ENCODE measurements at regions of chr17 and their contacts with region 1.

Region 1: DNA sequence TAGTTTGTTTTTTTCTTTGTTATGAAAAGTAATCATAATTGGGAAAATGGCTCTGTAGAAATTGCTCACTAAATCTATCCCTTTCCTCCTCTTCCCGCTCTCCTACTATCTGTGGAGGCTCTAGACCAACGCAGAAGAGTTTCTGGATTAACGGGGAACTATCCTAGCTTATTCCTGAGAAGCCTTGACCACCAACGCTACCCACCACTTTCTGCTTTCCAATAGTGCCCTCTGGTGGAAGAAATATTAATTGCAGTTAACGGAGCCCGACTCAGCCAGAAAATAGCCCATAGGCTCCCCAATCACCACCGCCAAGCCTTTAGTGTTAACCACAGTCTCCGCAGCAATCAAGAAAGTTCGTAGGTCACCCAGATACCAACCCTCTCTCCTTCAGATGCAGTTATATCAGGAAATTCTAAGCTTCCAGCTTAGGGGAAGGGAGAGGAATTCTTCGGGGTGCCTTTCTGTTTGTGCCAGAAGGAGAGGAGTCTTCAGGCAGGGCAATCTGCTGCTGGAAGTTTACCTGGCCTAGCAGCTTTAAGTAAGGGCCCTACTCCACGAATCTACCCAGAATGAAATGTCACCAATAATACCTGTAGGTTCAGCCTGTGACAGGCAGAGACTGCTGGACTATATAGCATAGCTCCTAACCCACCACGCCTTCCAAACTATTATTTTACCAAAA is 23.0 kb upstream of the NSRP1 start:
- DNase-seq: peak; percentile 54
- ATAC-seq: peak; percentile 86
- H3K4me3 ChIP-seq: no peak overlapping the region
- H3K27ac ChIP-seq: no peak overlapping the region
- H3K4me1 ChIP-seq: peaks cover 0 to 32% of the 10 kb centered on the region in 2 experiments; a peak in 2 of 4 replicates
- H3K27me3 ChIP-seq: no peaks in the 10 kb centered on the region
- CTCF ChIP-seq: peak; percentile 62 to 91 (median 85)
- POLR2A ChIP-seq: no peak
- RAD21 ChIP-seq: peak; percentile 93

Region 2: GRCh38 chr17:29589524-29590410 is 503.8 kb before region 1 on chr17 and contains the start of gene GIT1:
- CTCF ChIA-PET with region 1: interaction called, 16 read pairs
- POLR2A ChIA-PET with region 1: no interaction called
- RAD21 ChIA-PET with region 1: interaction called in 1 of 2 experiments, 3 read pairs
- intact Hi-C with region 1: no loop called
- DNase-seq: peak; percentile 59
- ATAC-seq: peak; percentile 55
- H3K4me3 ChIP-seq: peak within 1 kb of the TSS; percentile 86 to 96
- H3K27ac ChIP-seq: peak within 1 kb of the TSS; percentile 94
- H3K4me1 ChIP-seq: peaks cover 32 to 73% of the 10 kb centered on the region in 2 experiments
- H3K27me3 ChIP-seq: no peaks in the 10 kb centered on the region
- CTCF ChIP-seq: no peak
- POLR2A ChIP-seq: peak; percentile 23
- RAD21 ChIP-seq: no peak
- total RNA-seq, gene GIT1: 76.5 TPM

Region 3: GRCh38 chr17:29777663-29778062 is 315.9 kb before region 1 on chr17:
- CTCF ChIA-PET with region 1: interaction called, 14 read pairs
- POLR2A ChIA-PET with region 1: no interaction called
- RAD21 ChIA-PET with region 1: no interaction called
- intact Hi-C with region 1: no loop called
- DNase-seq: no peak
- ATAC-seq: no peak
- H3K4me3 ChIP-seq: no peak overlapping the region
- H3K27ac ChIP-seq: no peak overlapping the region
- H3K4me1 ChIP-seq: no peaks in the 10 kb centered on the region
- H3K27me3 ChIP-seq: no peaks in the 10 kb centered on the region
- CTCF ChIP-seq: no peak
- POLR2A ChIP-seq: no peak
- RAD21 ChIP-seq: no peak

Region 4: GRCh38 chr17:30021708-30022317 is 71.8 kb before region 1 on chr17:
- CTCF ChIA-PET with region 1: interaction called, 79 read pairs
- POLR2A ChIA-PET with region 1: no interaction called
- RAD21 ChIA-PET with region 1: interaction called, 4 to 7 read pairs
- intact Hi-C with region 1: loop called (anchors 1 kb)
- DNase-seq: peak; percentile 37
- ATAC-seq: peak; percentile 80
- H3K4me3 ChIP-seq: no peak overlapping the region
- H3K27ac ChIP-seq: no peak overlapping the region
- H3K4me1 ChIP-seq: no peaks in the 10 kb centered on the region
- H3K27me3 ChIP-seq: no peaks in the 10 kb centered on the region
- CTCF ChIP-seq: peak; percentile 72 to 85 (median 80); a peak in 5 of 6 replicates
- POLR2A ChIP-seq: no peak
- RAD21 ChIP-seq: peak; percentile 70

Region 5: GRCh38 chr17:30187573-30187972 is 94.0 kb after region 1 on chr17:
- CTCF ChIA-PET with region 1: no interaction called
- POLR2A ChIA-PET with region 1: no interaction called
- RAD21 ChIA-PET with region 1: no interaction called
- intact Hi-C with region 1: no loop called
- DNase-seq: no peak
- ATAC-seq: no peak
- H3K4me3 ChIP-seq: no peak overlapping the region
- H3K27ac ChIP-seq: no peak overlapping the region
- H3K4me1 ChIP-seq: no peaks in the 10 kb centered on the region
- H3K27me3 ChIP-seq: no peaks in the 10 kb centered on the region
- CTCF ChIP-seq: no peak
- POLR2A ChIP-seq: no peak
- RAD21 ChIP-seq: no peak